ENCODE measurements at regions of chr16 and their contacts with region 1.

Region 1: GRCh38 chr16:69709456-69710084 is 16.8 kb downstream of the NQO1 start:
- DNase-seq: no peak
- ATAC-seq: peak; percentile 40
- H3K4me3 Mint-ChIP-seq: no peak overlapping the region
- H3K27ac Mint-ChIP-seq: no peak overlapping the region
- H3K4me1 Mint-ChIP-seq: peaks cover 9% of the 10 kb centered on the region
- H3K27me3 Mint-ChIP-seq: no peaks in the 10 kb centered on the region

Region 2: GRCh38 chr16:69726296-69727060 is 16.9 kb after region 1 on chr16 and contains the start of gene NQO1:
- CTCF ChIA-PET with region 1: interaction called, 13 read pairs
- POLR2A ChIA-PET with region 1: interaction called, 3 read pairs
- intact Hi-C with region 1: no loop called
- DNase-seq: peak; percentile 95
- ATAC-seq: peak; percentile 99
- H3K4me3 Mint-ChIP-seq: peak within 1 kb of the TSS; percentile 79
- H3K27ac Mint-ChIP-seq: peak within 1 kb of the TSS; percentile 89
- H3K4me1 Mint-ChIP-seq: peaks cover 24% of the 10 kb centered on the region
- H3K27me3 Mint-ChIP-seq: no peaks in the 10 kb centered on the region
- total RNA-seq, gene NQO1: 9.9 to 11.4 TPM

Region 3: GRCh38 chr16:69930117-69930776 is 220.7 kb after region 1 on chr16:
- CTCF ChIA-PET with region 1: interaction called, 3 read pairs
- POLR2A ChIA-PET with region 1: no interaction called
- intact Hi-C with region 1: loop called in 1 of 2 experiments (anchors 1 kb)
- DNase-seq: peak; percentile 61
- ATAC-seq: peak; percentile 83
- H3K4me3 Mint-ChIP-seq: no peak overlapping the region
- H3K27ac Mint-ChIP-seq: no peak overlapping the region
- H3K4me1 Mint-ChIP-seq: no peaks in the 10 kb centered on the region
- H3K27me3 Mint-ChIP-seq: no peaks in the 10 kb centered on the region

Measured in activated CD4-positive, alpha-beta T cell treated with anti-CD3 and anti-CD28 coated beads for 36 hours (primary cell).